CD4-positive, alpha-beta memory T cell (primary cell): ENCODE measurements at regions of chr7 and their contacts with region 1.

Region 1: DNA sequence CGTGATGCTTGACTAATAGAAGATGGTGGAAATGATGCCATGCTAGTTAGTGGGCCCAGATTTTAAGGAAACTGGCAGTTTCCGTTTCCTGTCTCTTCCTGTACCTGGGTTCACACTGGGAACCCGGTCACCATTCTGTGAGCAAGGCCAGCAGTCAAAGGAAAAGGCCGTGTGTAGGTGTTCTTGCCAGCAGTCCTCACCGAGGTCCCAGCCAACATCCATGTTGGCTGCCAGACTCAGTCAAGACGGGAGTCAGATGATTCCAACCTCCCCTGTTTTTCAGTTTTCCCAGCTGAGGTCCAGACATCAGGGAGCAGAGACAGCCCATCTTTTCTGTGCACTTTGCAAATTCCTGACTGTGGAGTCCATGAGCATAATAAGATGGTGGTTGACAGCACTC is 15.2 kb upstream of the PILRB start:
- DNase-seq: no peak
- H3K4me3 ChIP-seq: no peak overlapping the region
- H3K4me3 Mint-ChIP-seq: peak overlapping the region in 1 of 8 donors; percentile 43
- H3K27ac ChIP-seq: no peak overlapping the region
- H3K27ac Mint-ChIP-seq: peak overlapping the region; percentile 83 to 92 (median 87)
- H3K4me1 ChIP-seq: peaks cover 21% of the 10 kb centered on the region
- H3K4me1 Mint-ChIP-seq: peaks cover 14 to 34% (median 19%) of the 10 kb centered on the region in 4 donors
- H3K27me3 ChIP-seq: no peaks in the 10 kb centered on the region
- H3K27me3 Mint-ChIP-seq: no peaks in the 10 kb centered on the region

Region 2: GRCh38 chr7:100257017-100257416 is 85.7 kb before region 1 on chr7:
- CTCF ChIA-PET with region 1: no interaction called
- POLR2A ChIA-PET with region 1: no interaction called
- intact Hi-C with region 1: no loop called
- DNase-seq: no peak
- H3K4me3 ChIP-seq: no peak overlapping the region
- H3K4me3 Mint-ChIP-seq: no peak overlapping the region
- H3K27ac ChIP-seq: no peak overlapping the region
- H3K27ac Mint-ChIP-seq: no peak overlapping the region
- H3K4me1 ChIP-seq: no peaks in the 10 kb centered on the region
- H3K4me1 Mint-ChIP-seq: peaks cover 0 to 2% (median 0%) of the 10 kb centered on the region in 4 donors
- H3K27me3 ChIP-seq: no peaks in the 10 kb centered on the region
- H3K27me3 Mint-ChIP-seq: no peaks in the 10 kb centered on the region

Region 3: DNA sequence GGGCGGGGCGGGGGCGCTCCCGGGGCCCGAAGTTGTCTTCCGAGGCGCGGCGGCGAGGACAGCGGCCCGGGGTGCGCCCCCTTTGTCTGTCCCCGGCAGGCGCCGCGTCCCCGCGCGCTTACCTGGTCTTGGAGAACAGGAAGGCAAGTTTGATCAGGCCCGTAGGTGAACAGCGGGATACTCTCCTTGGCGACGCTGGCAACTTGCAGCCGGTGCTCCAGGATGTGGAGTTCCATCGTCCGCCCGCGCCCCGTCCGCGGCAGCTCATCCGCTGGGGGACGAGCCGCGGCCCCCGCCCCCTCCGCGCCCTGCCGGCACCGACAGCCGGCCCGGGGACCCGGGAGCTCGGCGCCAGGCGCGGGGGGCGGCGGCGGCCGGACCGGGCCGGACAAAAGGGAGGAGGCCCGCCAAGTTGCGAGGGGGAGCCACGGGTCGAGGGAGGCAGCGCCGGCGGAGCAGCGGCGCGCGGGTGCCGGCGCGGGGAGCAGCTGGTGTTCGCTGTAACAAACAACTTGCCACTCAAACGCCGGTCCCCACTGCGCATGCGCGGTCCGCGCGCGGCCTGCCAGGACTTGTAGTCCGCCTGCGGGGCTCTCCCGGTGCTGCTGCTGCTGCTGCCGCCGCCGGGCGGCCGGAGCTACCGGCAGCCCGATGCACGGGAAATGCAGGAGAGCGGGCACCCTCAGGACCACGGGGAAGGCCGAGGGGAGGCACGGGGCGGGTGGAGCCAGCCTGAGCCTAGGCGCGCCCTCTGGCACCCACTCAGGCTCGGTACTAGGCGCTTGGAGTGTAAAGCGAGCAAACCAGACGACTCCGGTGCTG is 70.8 kb before region 1 on chr7:
- CTCF ChIA-PET with region 1: interaction called, 3 read pairs
- POLR2A ChIA-PET with region 1: interaction called, 3 read pairs
- intact Hi-C with region 1: loop called (anchors 5 kb)
- DNase-seq: peak; percentile 97 to 99 (median 98)
- H3K4me3 ChIP-seq: peak overlapping the region in 1 of 2 donors; percentile 53
- H3K4me3 Mint-ChIP-seq: peak overlapping the region; percentile 76 to 88 (median 82)
- H3K27ac ChIP-seq: peak overlapping the region; percentile 55
- H3K27ac Mint-ChIP-seq: peak overlapping the region in 6 of 7 donors; percentile 21 to 88 (median 64)
- H3K4me1 ChIP-seq: peaks cover 5% of the 10 kb centered on the region
- H3K4me1 Mint-ChIP-seq: peaks cover 5 to 14% (median 10%) of the 10 kb centered on the region in 4 donors
- H3K27me3 ChIP-seq: no peaks in the 10 kb centered on the region
- H3K27me3 Mint-ChIP-seq: no peaks in the 10 kb centered on the region